Astrocyte of the cerebellum (primary cell): ENCODE measurements at regions of chr18 and their contacts with region 1.

Region 1: GRCh38 chr18:58754544-58755068 is 83.3 kb downstream of the MALT1 start:
- DNase-seq: peak; percentile 98
- H3K4me3 ChIP-seq: no peak overlapping the region
- CTCF ChIP-seq: no peak

Region 2: GRCh38 chr18:58529714-58530354 is 224.8 kb before region 1 on chr18:
- in situ Hi-C with region 1: loop called (anchors 5 kb)
- DNase-seq: peak; percentile 60
- H3K4me3 ChIP-seq: no peak overlapping the region
- CTCF ChIP-seq: peak; percentile 80

Region 3: DNA sequence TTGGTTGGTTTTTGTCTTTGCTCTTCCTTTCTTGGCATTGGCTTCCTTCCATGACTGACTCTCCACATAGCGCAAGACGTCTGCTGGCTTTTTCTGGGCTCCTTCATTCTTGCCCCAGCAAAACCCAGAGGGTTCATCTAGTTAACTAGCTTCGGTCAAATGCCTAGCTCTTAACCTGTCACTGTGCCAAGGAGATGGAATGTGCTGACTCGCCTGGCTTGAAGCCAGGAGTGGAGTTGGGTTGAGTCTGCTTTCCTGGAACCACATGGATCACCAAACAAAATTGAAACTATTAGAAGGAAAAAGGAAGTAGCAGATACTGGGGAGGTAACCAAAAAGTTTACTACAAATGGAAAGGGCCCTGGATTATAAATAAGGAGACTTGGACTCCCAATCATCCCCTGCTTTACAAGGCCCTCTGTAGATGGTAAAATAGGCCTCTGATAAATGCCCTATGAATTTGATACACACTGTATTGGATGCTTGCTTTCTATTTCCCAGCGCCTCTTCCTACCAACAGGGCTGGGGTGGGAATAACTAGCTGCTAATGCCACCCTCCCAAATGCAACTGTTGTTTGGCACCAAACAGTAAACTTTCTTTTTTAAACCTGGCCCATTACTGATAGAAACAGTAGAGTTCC is 72.1 kb before region 1 on chr18:
- in situ Hi-C with region 1: no loop called
- DNase-seq: peak; percentile 82
- H3K4me3 ChIP-seq: no peak overlapping the region
- CTCF ChIP-seq: no peak